Mucosa of descending colon (tissue), 3 donors: ENCODE measurements at regions of chr20 and their contacts with region 1.

Region 1: DNA sequence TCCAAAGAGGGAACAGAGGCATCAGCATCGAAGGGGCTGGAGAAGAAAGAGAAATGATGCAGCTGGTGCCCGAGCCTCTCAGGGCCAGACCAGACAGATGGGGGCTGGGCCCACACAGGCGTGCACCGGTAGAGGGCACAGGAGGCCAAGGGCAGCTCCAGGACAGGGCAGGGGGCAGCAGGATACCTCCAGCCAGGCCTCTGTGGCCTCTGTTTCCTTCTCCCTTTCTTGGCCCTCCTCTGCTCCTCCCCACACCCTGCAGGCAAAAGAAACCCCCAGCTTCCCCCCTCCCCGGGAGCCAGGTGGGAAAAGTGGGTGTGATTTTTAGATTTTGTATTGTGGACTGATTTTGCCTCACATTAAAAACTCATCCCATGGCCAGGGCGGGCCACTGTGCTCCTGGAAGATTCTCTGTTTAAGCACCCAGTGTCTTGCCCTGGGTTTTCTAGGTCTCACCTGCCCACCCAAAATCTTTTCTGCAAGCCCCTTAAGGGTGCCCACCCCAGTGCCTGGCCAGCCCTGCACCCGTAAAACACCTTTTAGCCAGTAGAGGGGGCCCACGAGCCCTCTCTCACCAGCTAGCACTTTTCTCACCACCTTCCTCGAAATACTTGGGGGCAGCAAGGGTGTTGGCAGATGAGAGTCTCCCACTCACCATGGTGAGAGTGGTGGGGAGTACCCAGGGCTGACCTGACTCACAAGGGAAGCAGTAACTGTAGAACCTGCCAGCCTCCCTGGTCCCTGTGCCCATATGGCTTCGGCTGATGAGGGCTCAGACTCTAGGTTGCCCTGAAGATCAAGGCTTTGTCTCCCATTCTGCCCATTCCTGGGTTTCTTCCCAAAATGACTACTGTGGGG is 35.7 kb upstream of the ID1 start:
- DNase-seq: peak in 2 of 3 donors; percentile 77 to 85
- ATAC-seq: no peak
- H3K4me3 ChIP-seq: no peak overlapping the region
- H3K4me1 ChIP-seq: peaks cover 16% of the 10 kb centered on the region
- CTCF ChIP-seq: peak; percentile 69

Region 2: GRCh38 chr20:31605031-31605901 is 35.9 kb after region 1 on chr20 and contains the start of gene ID1:
- intact Hi-C with region 1: loop called in 1 of 2 experiments (anchors 5 kb)
- DNase-seq: peak; percentile 95 to 98 (median 96)
- ATAC-seq: peak; percentile 78
- H3K4me3 ChIP-seq: peak within 1 kb of the TSS; percentile 60
- H3K4me1 ChIP-seq: peaks cover 39% of the 10 kb centered on the region
- CTCF ChIP-seq: no peak
- total RNA-seq, gene ID1: 172 to 414 (median 201) TPM